ENCODE measurements at regions of chr19 and their contacts with region 1.

Region 1: GRCh38 chr19:35468637-35469036 is 20.6 kb downstream of the FFAR2 start:
- DNase-seq: peak; percentile 67 to 84 (median 72)
- H3K4me3 ChIP-seq: no peak overlapping the region
- H3K4me3 Mint-ChIP-seq: no peak overlapping the region
- H3K27ac ChIP-seq: no peak overlapping the region
- H3K27ac Mint-ChIP-seq: peak overlapping the region in 3 of 7 donors; percentile 19 to 41 (median 36)
- H3K4me1 ChIP-seq: peaks cover 5 to 11% of the 10 kb centered on the region in 2 donors
- H3K4me1 Mint-ChIP-seq: peaks cover 18% of the 10 kb centered on the region
- H3K27me3 ChIP-seq: no peaks in the 10 kb centered on the region
- H3K27me3 Mint-ChIP-seq: peaks cover 0 to 4% (median 0%) of the 10 kb centered on the region in 3 donors
- CTCF ChIP-seq: peak; percentile 85

Region 2: GRCh38 chr19:35417713-35418534 is 50.7 kb before region 1 on chr19:
- intact Hi-C with region 1: loop called (anchors 1 to 5 kb)
- DNase-seq: peak in 2 of 3 donors; percentile 14 to 74
- H3K4me3 ChIP-seq: no peak overlapping the region
- H3K4me3 Mint-ChIP-seq: peak overlapping the region in 1 of 2 donors; percentile 46
- H3K27ac ChIP-seq: no peak overlapping the region
- H3K27ac Mint-ChIP-seq: peak overlapping the region in 3 of 7 donors; percentile 35 to 68 (median 64)
- H3K4me1 ChIP-seq: peaks cover 13 to 21% of the 10 kb centered on the region in 2 donors
- H3K4me1 Mint-ChIP-seq: peaks cover 27% of the 10 kb centered on the region
- H3K27me3 ChIP-seq: peaks cover 0 to 13% of the 10 kb centered on the region in 2 donors
- H3K27me3 Mint-ChIP-seq: peaks cover 22 to 38% (median 28%) of the 10 kb centered on the region in 3 donors
- CTCF ChIP-seq: no peak

Region 3: GRCh38 chr19:35509018-35509652 is 40.5 kb after region 1 on chr19:
- intact Hi-C with region 1: no loop called
- DNase-seq: no peak
- H3K4me3 ChIP-seq: no peak overlapping the region
- H3K4me3 Mint-ChIP-seq: peak overlapping the region in 1 of 2 donors; percentile 71
- H3K27ac ChIP-seq: no peak overlapping the region
- H3K27ac Mint-ChIP-seq: peak overlapping the region in 1 of 7 donors; percentile 25
- H3K4me1 ChIP-seq: peaks cover 0 to 4% of the 10 kb centered on the region in 2 donors
- H3K4me1 Mint-ChIP-seq: peaks cover 7% of the 10 kb centered on the region
- H3K27me3 ChIP-seq: peaks cover 18 to 47% of the 10 kb centered on the region in 2 donors
- H3K27me3 Mint-ChIP-seq: peaks cover 56 to 73% (median 64%) of the 10 kb centered on the region in 3 donors
- CTCF ChIP-seq: no peak